RWPE1 (cell line): ENCODE measurements at regions of chr5 and their contacts with region 1.

Region 1: DNA sequence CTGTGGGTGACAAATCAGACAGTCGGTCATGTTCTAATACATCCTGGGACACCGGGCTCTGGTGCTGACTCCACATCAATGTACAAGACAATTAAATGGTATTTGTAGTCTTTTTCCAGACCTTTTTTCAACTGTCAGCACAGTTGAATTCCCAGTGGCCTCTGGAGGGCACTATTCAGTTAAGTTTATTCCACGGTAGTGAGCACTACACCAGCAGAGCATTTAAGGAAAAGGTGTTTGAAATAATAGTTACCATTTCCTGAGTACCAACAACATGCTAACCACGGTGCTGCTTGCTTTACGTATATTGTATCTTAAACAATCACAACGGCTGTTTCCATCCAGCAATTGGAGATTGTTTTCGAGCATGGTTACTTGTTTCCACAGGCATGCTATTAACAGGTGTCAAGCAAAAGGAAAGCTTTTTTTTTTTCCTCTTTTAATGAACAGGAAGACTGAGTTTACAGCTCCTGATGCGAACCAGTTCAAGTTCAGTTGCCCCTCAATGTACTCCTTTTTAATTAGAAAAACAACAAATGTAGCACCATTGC is 186.7 kb downstream of the PDZD2 start:
- DNase-seq: peak; percentile 61
- H3K27ac ChIP-seq: no peak overlapping the region
- CTCF ChIP-seq: peak; percentile 86

Region 2: DNA sequence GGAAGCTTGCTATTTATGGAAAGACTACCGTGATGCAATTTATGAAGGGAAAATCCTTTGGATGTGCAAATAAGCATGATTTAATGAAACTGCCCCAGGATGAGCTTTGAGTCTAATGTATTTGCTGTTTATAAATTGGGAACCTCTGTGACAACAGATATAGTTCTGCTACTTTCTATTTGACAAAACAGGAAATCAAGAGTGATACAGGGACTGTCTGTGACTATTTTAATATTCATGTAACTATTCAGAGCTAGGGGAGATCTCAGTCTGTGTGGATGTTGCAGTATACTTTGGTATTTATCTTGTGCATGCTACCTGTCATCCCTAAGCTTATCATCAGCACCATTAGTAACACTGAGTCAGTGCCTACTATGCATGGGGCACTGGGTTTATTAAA is 54.6 kb before region 1 on chr5:
- CTCF ChIA-PET with region 1: interaction called, 10 read pairs
- POLR2A ChIA-PET with region 1: no interaction called
- DNase-seq: no peak
- H3K27ac ChIP-seq: no peak overlapping the region
- CTCF ChIP-seq: no peak

Region 3: GRCh38 chr5:31800351-31800750 is 25.2 kb before region 1 on chr5:
- CTCF ChIA-PET with region 1: no interaction called
- POLR2A ChIA-PET with region 1: no interaction called
- DNase-seq: no peak
- H3K27ac ChIP-seq: no peak overlapping the region
- CTCF ChIP-seq: no peak

Region 4: GRCh38 chr5:32027717-32028321 is 202.2 kb after region 1 on chr5:
- CTCF ChIA-PET with region 1: interaction called, 10 read pairs
- POLR2A ChIA-PET with region 1: no interaction called
- DNase-seq: peak; percentile 77
- H3K27ac ChIP-seq: peak overlapping the region; percentile 94
- CTCF ChIP-seq: no peak

Region 5: GRCh38 chr5:32092938-32093812 is 267.6 kb after region 1 on chr5:
- CTCF ChIA-PET with region 1: interaction called, 26 read pairs
- POLR2A ChIA-PET with region 1: no interaction called
- DNase-seq: peak; percentile 75
- H3K27ac ChIP-seq: 0 out of 2 replicates have a peak overlapping the region, but pooled peaks have one; percentile 29
- CTCF ChIP-seq: peak; percentile 88

Region 6: GRCh38 chr5:32355686-32356085 is 530.1 kb after region 1 on chr5:
- CTCF ChIA-PET with region 1: no interaction called
- POLR2A ChIA-PET with region 1: no interaction called
- DNase-seq: no peak
- H3K27ac ChIP-seq: no peak overlapping the region
- CTCF ChIP-seq: no peak